Dorsolateral prefrontal cortex (tissue), 120 donors: ENCODE measurements at regions of chr9 and their contacts with region 1.

Region 1: GRCh38 chr9:18610956-18611355 is 137.0 kb downstream of the ADAMTSL1 start:
- DNase-seq: peak in 2 of 10 donors; percentile 26 to 27
- H3K4me3 ChIP-seq: peak overlapping the region in 3 of 59 donors; percentile 20 to 29 (median 26)
- H3K27ac ChIP-seq: peak overlapping the region in 3 of 59 donors; percentile 22 to 41 (median 22)
- H3K27me3 ChIP-seq: no peaks in the 10 kb centered on the region
- CTCF ChIP-seq: peak in 4 of 56 donors; percentile 8 to 18 (median 14)

Region 2: DNA sequence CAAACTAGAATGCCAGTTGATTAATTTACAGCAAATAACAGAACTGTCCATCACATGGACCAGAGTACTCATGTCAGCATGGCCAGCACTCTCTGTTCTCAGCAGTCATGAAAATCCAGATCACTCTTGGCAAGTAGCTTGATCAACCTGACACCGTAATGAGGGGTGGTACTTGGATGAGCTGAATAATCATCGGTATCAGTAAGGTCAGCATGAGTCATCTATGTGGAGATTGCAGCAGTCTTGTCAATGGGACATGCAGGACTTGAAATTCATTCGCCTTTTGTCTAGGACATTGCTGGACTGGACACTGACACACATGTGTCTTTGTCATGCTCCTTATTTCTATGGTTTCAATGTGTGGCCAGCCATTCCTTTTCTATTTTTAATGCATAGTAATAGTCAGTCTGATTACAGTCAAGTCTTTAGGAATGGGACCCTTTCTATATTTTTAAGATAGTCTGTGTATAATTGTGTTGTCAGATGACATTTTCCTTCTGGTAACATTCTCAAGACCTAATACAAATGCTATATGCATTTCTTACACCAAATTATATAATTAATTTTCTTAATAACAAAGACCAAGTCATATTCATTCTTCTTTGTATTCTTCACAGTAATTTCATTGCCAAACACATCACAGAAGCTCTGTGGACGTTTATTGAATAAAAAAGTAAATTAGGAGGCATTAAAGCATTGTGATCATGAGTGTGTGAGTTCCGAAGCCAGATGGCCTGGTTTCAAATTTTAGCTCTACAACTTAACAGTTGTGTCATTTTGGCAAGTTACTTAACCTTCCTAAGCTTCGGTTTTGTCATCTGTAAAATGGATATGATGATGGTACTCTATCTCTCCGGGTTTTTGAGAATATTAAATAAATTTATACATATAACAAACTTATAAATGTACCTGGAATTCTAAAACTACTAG is 79.6 kb before region 1 on chr9:
- intact Hi-C with region 1: no loop called
- DNase-seq: no peak
- H3K4me3 ChIP-seq: no peak overlapping the region
- H3K27ac ChIP-seq: no peak overlapping the region
- H3K27me3 ChIP-seq: no peaks in the 10 kb centered on the region
- CTCF ChIP-seq: no peak

Region 3: DNA sequence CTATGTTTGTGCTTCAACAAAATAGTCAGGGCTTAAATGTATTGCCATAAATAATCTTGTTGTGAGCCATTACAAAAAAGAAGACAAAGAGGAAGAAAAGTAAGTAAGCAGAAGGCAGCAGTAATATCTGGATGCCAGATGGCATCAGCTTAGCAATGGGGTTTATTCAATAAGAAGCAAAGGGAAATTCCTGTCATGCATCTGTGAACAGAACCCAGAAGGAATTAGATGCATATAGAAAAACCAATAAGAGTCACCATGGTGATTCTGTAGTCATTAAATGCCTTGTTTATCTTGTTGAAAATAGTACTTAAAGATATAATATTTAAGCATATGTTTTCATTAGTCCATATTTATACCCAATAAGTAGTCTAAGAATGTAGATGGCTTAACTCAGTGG is 79.0 kb after region 1 on chr9:
- intact Hi-C with region 1: loop called in 1 of 2 experiments (anchors 10 kb)
- DNase-seq: no peak
- H3K4me3 ChIP-seq: no peak overlapping the region
- H3K27ac ChIP-seq: no peak overlapping the region
- H3K27me3 ChIP-seq: no peaks in the 10 kb centered on the region
- CTCF ChIP-seq: no peak

Region 4: DNA sequence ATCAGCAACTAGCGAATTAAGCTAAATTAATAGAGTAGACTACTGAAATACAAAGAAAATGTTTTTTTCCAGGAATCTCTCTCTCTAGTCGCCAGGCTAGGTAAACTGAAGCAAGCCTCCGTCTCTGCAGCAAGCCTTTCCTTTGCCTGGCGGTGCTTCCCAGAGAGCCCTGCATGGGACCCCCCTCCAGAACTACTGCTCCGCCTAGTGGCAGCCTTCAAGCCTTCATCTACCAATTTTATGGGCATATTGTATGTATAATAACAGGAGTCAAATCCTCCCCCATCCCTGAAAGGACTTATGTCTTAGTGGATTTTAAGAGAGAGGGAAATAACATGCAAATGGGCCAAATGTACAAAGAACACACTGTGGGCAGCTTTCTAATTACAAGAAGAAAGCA is 180.1 kb after region 1 on chr9:
- intact Hi-C with region 1: no loop called
- DNase-seq: no peak
- H3K4me3 ChIP-seq: no peak overlapping the region
- H3K27ac ChIP-seq: no peak overlapping the region
- H3K27me3 ChIP-seq: no peaks in the 10 kb centered on the region
- CTCF ChIP-seq: peak in 21 of 56 donors; percentile 8 to 40 (median 20)